B cell (primary cell): ENCODE measurements at regions of chr20 and their contacts with region 1.

Region 1: DNA sequence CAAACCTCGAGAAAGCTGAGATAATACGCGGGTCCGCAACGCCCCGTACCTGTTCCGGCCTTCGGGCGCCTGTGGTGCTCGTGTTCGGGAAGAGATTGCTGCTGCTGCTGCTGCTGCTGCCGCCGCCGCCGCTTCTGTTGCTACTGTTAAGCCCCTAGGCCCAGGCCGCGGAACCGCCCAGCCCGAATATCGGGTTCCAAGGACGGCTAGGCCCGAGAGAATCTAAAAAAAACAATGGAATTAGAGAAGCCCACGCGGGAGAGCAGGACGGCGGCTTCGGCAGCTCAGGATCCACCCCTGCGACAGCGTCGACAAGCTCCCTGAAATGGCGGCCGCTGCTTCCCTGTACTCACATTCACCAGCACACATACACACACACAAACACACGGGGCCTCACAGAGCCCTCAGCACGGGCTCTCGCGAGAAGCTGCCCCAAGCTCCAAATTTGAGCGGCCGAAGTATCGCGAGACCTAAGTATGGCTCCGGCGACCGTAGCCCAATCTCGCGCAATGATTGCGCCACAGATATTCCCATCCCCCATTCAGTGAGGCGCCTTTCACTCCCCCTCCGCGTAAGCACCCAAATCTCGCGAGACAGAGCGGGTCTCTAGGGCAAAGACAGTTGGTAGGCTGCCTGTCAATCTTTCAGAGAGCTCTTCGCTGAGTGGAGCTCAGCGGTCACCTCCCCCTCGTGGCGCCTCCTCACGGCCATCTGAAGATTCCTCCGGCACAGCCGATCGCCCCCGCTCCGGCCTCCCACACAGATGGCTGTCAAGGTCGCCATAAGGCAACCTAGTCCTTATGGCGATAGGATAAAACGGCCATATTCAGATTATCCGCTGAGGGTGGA is at the start of gene RBM39:
- DNase-seq: peak; percentile 100
- ATAC-seq: peak; percentile 83
- H3K4me3 ChIP-seq: peak within 1 kb of the TSS; percentile 95 to 99 (median 99)
- H3K4me3 Mint-ChIP-seq: peak within 1 kb of the TSS; percentile 95
- H3K27ac ChIP-seq: peak within 1 kb of the TSS; percentile 100
- H3K27ac Mint-ChIP-seq: peak within 1 kb of the TSS; percentile 100
- H3K4me1 ChIP-seq: peaks cover 38 to 42% of the 10 kb centered on the region in 2 donors
- H3K4me1 Mint-ChIP-seq: peaks cover 46% of the 10 kb centered on the region
- H3K27me3 ChIP-seq: no peaks in the 10 kb centered on the region
- H3K27me3 Mint-ChIP-seq: no peaks in the 10 kb centered on the region
- CTCF ChIP-seq: peak; percentile 57
- total RNA-seq, gene RBM39: 689 and 698 TPM in 2 replicates

Region 2: GRCh38 chr20:35490736-35491181 is 251.4 kb before region 1 on chr20:
- CTCF ChIA-PET with region 1: no interaction called
- POLR2A ChIA-PET with region 1: interaction called, 12 read pairs
- intact Hi-C with region 1: no loop called
- DNase-seq: peak; percentile 81
- ATAC-seq: peak; percentile 100
- H3K4me3 ChIP-seq: peak overlapping the region; percentile 73 to 92 (median 85)
- H3K4me3 Mint-ChIP-seq: peak overlapping the region; percentile 98
- H3K27ac ChIP-seq: peak overlapping the region; percentile 83 to 92
- H3K27ac Mint-ChIP-seq: peak overlapping the region; percentile 96
- H3K4me1 ChIP-seq: peaks cover 39 to 58% of the 10 kb centered on the region in 2 donors
- H3K4me1 Mint-ChIP-seq: peaks cover 54% of the 10 kb centered on the region
- H3K27me3 ChIP-seq: no peaks in the 10 kb centered on the region
- H3K27me3 Mint-ChIP-seq: no peaks in the 10 kb centered on the region
- CTCF ChIP-seq: no peak

Region 3: DNA sequence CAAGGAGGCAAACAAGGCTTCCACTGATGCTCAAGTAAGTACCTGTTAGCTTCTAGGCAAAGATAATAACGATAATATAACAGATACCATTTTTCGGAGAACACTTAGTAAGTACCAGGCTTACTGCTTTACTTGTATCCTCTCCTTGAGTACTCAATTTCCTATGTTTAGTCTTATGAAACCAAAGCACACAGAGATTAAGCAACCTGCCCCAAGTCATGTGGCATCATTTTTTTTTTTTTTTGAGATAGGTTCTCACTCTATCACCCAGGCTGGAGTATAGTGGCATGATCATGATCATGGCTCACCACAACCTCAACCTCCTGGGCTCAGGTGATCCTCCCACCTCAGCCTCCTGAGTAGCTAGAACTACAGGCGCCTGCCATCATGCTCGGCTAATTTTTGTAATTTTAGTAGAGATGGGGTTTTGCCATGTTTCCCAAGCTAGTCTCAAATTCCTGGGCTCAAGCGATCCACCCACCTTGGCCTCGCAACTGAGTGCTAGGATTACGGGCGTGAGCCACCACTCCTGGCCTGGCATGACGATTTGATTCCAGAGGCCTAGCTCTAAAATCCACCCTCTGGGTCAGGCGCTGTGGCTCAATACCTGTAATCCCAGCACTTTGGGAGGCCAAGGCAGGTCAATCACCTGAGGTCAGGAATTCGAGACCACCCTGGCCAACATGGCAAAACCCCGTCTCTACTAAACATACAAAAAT is 112.5 kb before region 1 on chr20:
- CTCF ChIA-PET with region 1: no interaction called
- POLR2A ChIA-PET with region 1: interaction called, 14 read pairs
- intact Hi-C with region 1: no loop called
- DNase-seq: no peak
- ATAC-seq: no peak
- H3K4me3 ChIP-seq: no peak overlapping the region
- H3K4me3 Mint-ChIP-seq: no peak overlapping the region
- H3K27ac ChIP-seq: no peak overlapping the region
- H3K27ac Mint-ChIP-seq: no peak overlapping the region
- H3K4me1 ChIP-seq: no peaks in the 10 kb centered on the region
- H3K4me1 Mint-ChIP-seq: peaks cover 2% of the 10 kb centered on the region
- H3K27me3 ChIP-seq: no peaks in the 10 kb centered on the region
- H3K27me3 Mint-ChIP-seq: no peaks in the 10 kb centered on the region
- CTCF ChIP-seq: no peak

Region 4: DNA sequence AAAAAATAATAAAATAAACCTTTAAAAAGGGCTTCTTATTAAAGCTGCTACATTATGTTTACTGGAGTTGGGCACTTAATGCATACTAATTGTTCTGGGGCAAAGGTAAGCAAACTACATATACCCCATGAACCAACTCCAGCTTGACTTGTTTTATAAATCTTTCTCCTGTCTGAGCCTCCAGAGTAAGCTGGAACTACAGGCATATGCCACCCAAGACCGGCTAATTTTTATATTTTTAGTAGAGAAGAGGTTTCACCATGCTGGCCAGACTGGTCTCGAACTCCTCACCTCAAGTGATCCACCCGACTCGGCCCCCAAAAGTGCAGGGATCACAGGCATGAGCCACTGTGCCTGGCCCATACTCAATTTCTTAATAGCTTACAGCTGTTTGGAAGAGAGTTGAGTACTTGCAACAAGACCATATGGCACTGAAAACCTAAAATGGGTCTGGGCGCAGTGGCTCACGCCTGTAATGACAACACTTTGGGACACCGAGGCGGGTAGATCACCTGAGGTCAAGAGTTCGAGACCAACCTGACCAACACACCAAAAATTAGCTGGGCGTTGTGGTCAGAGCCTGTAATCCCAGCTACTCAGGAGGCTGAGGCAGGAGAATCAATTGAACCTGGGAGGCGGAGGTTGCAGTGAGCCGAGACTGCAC is 23.0 kb before region 1 on chr20:
- CTCF ChIA-PET with region 1: interaction called, 5 read pairs
- POLR2A ChIA-PET with region 1: interaction called, 11 read pairs
- intact Hi-C with region 1: no loop called
- DNase-seq: no peak
- ATAC-seq: no peak
- H3K4me3 ChIP-seq: no peak overlapping the region
- H3K4me3 Mint-ChIP-seq: no peak overlapping the region
- H3K27ac ChIP-seq: no peak overlapping the region
- H3K27ac Mint-ChIP-seq: no peak overlapping the region
- H3K4me1 ChIP-seq: no peaks in the 10 kb centered on the region
- H3K4me1 Mint-ChIP-seq: peaks cover 15% of the 10 kb centered on the region
- H3K27me3 ChIP-seq: no peaks in the 10 kb centered on the region
- H3K27me3 Mint-ChIP-seq: no peaks in the 10 kb centered on the region
- CTCF ChIP-seq: no peak

Region 5: GRCh38 chr20:35796571-35796970 is 54.5 kb after region 1 on chr20:
- CTCF ChIA-PET with region 1: interaction called, 6 read pairs
- POLR2A ChIA-PET with region 1: interaction called, 19 read pairs
- intact Hi-C with region 1: no loop called
- DNase-seq: peak; percentile 77
- ATAC-seq: peak; percentile 80
- H3K4me3 ChIP-seq: peak overlapping the region in 1 of 5 experiments; percentile 30
- H3K4me3 Mint-ChIP-seq: peak overlapping the region; percentile 52
- H3K27ac ChIP-seq: peak overlapping the region; percentile 90 to 96
- H3K27ac Mint-ChIP-seq: peak overlapping the region; percentile 86
- H3K4me1 ChIP-seq: peaks cover 14 to 16% of the 10 kb centered on the region in 2 donors
- H3K4me1 Mint-ChIP-seq: peaks cover 22% of the 10 kb centered on the region
- H3K27me3 ChIP-seq: no peaks in the 10 kb centered on the region
- H3K27me3 Mint-ChIP-seq: no peaks in the 10 kb centered on the region
- CTCF ChIP-seq: no peak

Region 6: DNA sequence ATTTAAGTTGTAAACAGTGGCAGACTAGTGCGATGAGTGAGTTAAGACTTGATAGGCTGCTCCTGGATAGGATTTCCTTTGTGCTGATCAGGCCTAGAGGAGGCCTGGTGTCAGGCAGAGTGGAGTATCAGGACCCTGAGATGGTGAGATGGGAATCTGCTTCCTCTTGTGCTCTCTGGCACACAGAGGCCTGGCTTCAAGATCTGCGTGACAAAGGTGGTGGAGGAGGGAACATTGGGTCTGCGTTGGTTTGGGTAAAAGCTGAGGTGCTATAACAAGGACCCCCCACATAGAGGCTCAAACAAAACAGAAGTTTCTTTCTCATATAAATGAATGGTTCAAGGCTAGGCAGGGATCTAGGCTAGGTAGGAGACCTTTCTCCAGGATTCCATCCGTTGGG is 191.9 kb after region 1 on chr20:
- CTCF ChIA-PET with region 1: no interaction called
- POLR2A ChIA-PET with region 1: no interaction called
- intact Hi-C with region 1: no loop called
- DNase-seq: no peak
- ATAC-seq: no peak
- H3K4me3 ChIP-seq: no peak overlapping the region
- H3K4me3 Mint-ChIP-seq: no peak overlapping the region
- H3K27ac ChIP-seq: no peak overlapping the region
- H3K27ac Mint-ChIP-seq: no peak overlapping the region
- H3K4me1 ChIP-seq: no peaks in the 10 kb centered on the region
- H3K4me1 Mint-ChIP-seq: no peaks in the 10 kb centered on the region
- H3K27me3 ChIP-seq: no peaks in the 10 kb centered on the region
- H3K27me3 Mint-ChIP-seq: no peaks in the 10 kb centered on the region
- CTCF ChIP-seq: no peak